ENCODE measurements at regions of chr14 and their contacts with region 1.

Region 1: DNA sequence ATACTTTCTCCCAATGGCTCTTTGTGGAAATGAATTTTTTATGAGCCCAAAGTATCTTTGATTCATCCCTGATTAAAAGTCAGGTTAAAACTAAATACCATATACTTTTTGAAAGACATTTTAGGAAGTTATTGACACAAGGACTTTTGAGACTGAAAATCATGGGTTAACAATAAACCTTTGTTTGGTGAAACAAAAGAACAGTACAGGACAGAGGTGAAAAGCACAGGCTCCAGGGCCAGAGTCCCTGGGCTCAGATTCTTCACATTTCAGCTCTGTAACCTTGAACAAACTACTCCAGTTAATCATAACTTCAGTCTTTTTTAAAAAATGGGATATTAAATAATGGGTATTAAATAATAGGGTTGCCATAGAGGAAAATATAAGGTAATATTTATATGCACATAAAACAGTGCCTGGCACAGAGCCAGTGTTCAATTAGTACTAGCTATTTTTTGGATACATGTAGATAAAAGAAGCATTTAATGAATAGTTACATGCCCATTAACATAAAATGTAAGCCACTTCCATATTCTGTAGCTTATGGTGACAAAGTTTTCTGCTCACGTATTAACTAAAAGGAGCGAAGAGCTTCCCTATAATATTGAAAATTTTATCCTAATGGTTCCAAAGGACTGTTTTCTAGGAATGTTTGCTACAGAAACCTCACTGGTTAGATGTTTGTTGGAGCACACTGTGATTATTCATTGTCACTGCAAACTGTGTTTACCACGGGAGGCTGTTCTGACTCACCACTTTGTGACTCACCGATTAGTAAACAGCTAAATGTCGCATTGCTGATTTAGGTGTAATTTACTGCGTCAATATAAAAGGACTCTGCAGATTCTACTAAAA is 255.4 kb downstream of the DAD1 start:
- DNase-seq: peak; percentile 99
- ATAC-seq: peak; percentile 94
- H3K4me3 ChIP-seq: peak overlapping the region; percentile 62
- H3K27ac ChIP-seq: peak overlapping the region; percentile 90
- H3K4me1 ChIP-seq: peaks cover 31% of the 10 kb centered on the region
- H3K27me3 ChIP-seq: no peaks in the 10 kb centered on the region
- CTCF ChIP-seq: no peak

Region 2: DNA sequence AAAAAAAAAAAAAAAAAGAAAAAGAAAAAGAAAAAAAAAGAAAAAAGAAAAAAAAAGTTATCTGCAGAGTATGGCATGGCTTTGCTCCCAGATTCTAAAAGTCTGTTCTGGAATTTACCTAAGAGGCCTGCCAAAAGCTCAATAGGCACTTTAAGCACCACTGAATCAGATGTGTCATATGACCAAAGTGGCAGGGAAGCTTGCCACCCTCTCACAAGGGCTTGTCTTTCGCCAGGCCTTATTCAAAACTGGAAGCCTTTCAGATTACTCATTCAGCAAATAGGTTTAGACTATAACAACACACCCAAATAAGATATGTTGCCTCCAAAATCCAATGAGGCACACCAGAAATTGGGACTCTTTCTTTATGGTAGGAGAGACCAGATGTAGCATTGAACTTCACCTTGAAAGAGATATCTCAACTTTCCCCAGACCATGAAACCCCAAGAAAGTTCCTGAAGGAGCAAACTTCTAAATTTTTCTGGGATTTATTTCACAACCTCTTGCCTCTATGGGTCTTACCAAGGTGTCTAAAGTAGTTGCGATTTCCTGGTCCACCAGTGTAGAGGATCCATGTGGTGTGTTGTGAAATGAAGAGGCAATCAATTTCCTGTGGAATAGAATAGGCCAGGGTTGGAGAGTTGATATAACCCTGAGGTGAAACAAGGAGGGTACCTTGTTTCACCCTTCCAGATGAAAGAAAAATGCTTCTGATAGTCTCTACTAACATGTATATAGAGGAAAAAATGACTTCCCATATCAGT is 36.6 kb after region 1 on chr14:
- CTCF ChIA-PET with region 1: interaction called, 5 read pairs
- POLR2A ChIA-PET with region 1: no interaction called
- intact Hi-C with region 1: loop called (anchors 1 kb)
- DNase-seq: peak; percentile 97
- ATAC-seq: peak; percentile 94
- H3K4me3 ChIP-seq: no peak overlapping the region
- H3K27ac ChIP-seq: peak overlapping the region; percentile 50
- H3K4me1 ChIP-seq: peaks cover 21% of the 10 kb centered on the region
- H3K27me3 ChIP-seq: no peaks in the 10 kb centered on the region
- CTCF ChIP-seq: no peak

Region 3: GRCh38 chr14:22375321-22375930 is 41.8 kb after region 1 on chr14:
- CTCF ChIA-PET with region 1: no interaction called
- POLR2A ChIA-PET with region 1: no interaction called
- intact Hi-C with region 1: loop called (anchors 1 kb)
- DNase-seq: peak; percentile 87
- ATAC-seq: peak; percentile 56; the same call in 1 of the 2 replicates
- H3K4me3 ChIP-seq: no peak overlapping the region
- H3K27ac ChIP-seq: no peak overlapping the region
- H3K4me1 ChIP-seq: peaks cover 26% of the 10 kb centered on the region
- H3K27me3 ChIP-seq: no peaks in the 10 kb centered on the region
- CTCF ChIP-seq: peak; percentile 85

Region 4: GRCh38 chr14:22418631-22419030 is 85.0 kb after region 1 on chr14:
- CTCF ChIA-PET with region 1: no interaction called
- POLR2A ChIA-PET with region 1: no interaction called
- intact Hi-C with region 1: no loop called
- DNase-seq: no peak
- ATAC-seq: no peak
- H3K4me3 ChIP-seq: no peak overlapping the region
- H3K27ac ChIP-seq: no peak overlapping the region
- H3K4me1 ChIP-seq: no peaks in the 10 kb centered on the region
- H3K27me3 ChIP-seq: no peaks in the 10 kb centered on the region
- CTCF ChIP-seq: no peak

Region 5: GRCh38 chr14:22822571-22823098 is 489.0 kb after region 1 on chr14:
- CTCF ChIA-PET with region 1: interaction called, 10 read pairs
- POLR2A ChIA-PET with region 1: no interaction called
- intact Hi-C with region 1: no loop called
- DNase-seq: peak; percentile 89
- ATAC-seq: peak; percentile 83
- H3K4me3 ChIP-seq: peak overlapping the region; percentile 62
- H3K27ac ChIP-seq: no peak overlapping the region
- H3K4me1 ChIP-seq: peaks cover 39% of the 10 kb centered on the region
- H3K27me3 ChIP-seq: no peaks in the 10 kb centered on the region
- CTCF ChIP-seq: peak; percentile 88

Measured in PC-3 (cell line).